ENCODE measurements at regions of chr1 and their contacts with region 1.

Region 1: DNA sequence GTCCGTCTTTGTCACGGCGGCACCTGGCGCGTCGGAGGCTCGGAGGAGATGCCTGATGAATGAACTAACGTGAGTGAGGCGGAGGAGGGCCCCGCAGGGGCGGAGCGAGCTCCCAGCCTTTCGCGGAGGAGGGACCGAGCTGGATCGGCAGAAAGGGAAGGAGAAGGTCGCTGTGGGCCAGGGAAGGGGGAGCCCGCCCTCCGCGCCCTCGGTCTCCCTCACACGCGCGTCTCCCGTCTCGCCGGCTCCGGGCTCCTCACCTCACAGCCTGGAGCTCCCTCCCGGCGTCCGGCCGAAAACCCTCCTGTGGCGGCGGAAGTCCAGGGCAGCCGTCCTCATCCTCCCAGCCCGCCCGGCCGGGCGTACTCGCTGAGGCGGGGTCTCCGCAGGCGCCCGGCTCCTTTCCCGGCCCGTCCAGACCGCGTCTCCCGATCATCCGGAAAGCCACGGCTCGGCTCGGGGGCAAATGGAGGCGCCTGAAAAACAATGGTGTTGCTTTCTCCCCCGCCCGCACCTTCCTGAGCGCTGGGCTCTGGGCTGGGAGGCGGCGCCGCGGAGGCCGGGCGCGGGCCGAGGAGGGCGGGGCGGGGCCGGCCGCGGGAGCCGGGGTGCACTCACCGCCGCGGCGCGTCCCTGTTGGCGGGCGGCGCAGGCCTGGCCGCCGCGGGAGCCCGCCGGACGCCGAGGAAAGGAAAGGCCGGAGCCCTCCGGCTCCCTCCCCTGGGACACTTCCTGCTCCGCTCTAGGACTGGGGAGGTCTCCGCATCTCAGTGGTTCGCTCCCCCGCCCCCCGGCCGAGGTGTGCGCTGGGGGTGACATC is at the start of gene ZNF496:
- DNase-seq: peak; percentile 98
- ATAC-seq: peak; percentile 75
- H3K4me3 ChIP-seq: peak within 1 kb of the TSS; percentile 88
- H3K27ac ChIP-seq: peak within 1 kb of the TSS; percentile 51
- H3K4me1 ChIP-seq: peaks cover 46% of the 10 kb centered on the region
- H3K27me3 ChIP-seq: no peaks in the 10 kb centered on the region
- CTCF ChIP-seq: no peak
- total RNA-seq, gene ZNF496: 79.4 and 103 TPM in 2 replicates

Region 2: DNA sequence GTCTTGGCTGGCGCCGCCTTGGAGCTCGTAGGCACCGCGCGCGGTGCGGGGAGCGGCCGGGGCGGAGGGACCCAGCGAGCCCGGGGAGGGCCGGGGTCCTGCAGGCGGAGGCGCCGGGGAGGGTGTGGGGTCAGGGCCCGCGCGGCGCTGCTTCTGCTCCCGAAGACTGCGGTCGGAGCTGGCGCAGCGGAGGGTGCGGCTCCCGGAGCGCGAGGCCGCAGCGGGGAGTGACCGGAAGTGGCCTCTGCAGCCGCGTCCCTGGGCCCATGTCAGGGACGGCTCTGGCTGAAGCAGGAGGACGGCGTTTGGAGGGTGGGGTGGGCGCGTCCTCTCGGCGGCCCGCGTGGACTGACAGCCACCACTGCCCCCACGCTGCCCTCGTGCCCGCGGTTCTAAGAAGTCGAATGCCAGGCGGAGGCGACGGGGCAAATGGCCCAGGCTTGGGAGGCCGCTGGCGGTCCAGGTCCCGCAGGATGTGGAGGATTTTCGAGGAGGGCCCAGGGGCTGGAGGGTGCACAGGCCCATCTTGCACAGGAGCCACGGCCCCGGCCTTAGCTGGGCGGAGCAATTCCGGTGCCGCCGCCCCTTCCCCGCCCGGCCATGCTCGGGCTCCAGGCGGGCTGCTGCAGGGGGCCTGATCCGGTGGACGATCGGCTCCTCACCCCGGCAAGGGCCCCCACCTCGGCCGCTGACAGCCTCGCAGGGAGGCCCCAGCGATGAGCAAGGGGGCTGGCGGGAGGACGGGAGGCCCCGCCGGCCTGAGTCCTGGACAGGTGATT is 219.5 kb before region 1 on chr1:
- CTCF ChIA-PET with region 1: no interaction called
- POLR2A ChIA-PET with region 1: no interaction called
- intact Hi-C with region 1: loop called (anchors 5 kb)
- DNase-seq: peak; percentile 48
- ATAC-seq: peak; percentile 74
- H3K4me3 ChIP-seq: peak overlapping the region; percentile 83
- H3K27ac ChIP-seq: no peak overlapping the region
- H3K4me1 ChIP-seq: peaks cover 18% of the 10 kb centered on the region
- H3K27me3 ChIP-seq: no peaks in the 10 kb centered on the region
- CTCF ChIP-seq: no peak

Region 3: DNA sequence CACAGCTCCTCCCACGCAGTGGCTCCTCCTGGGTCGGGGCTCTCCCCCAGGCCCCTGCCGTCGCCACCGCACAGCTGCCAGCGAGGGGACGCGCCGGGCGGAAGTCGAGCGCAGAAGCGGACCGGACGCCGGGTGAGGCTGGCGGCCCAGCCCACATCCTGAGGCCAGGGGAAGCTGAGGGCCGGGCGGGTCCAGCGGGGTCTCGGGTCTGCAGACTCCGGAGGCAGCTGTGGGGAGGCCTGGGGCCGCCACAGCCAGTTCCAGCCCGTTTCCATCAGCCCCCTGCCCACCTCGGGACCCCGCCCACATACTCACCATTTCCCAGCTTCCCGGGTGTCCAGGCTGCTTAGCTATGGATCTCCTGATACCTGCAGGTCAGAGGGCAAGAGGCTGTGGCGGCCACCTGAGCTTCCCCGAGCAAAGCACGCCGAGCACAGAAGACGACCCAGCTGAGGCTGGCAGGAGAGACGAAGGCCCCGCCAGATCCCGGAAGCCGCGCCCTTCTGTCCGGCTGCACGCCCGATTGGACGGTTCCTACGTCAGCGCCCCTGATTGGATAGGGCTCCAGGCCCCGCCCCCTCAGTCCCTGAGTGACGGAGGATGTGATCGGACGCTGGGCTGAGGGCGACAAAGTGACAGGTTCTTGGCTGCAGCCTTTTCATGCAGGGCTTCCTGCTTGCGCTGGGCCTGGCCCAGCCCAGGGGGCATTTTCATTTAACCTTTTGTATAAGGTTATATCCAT is 120.8 kb before region 1 on chr1:
- CTCF ChIA-PET with region 1: no interaction called
- POLR2A ChIA-PET with region 1: no interaction called
- intact Hi-C with region 1: loop called (anchors 1 kb)
- DNase-seq: peak; percentile 100
- ATAC-seq: peak; percentile 98
- H3K4me3 ChIP-seq: peak overlapping the region; percentile 79
- H3K27ac ChIP-seq: peak overlapping the region; percentile 40
- H3K4me1 ChIP-seq: peaks cover 19% of the 10 kb centered on the region
- H3K27me3 ChIP-seq: no peaks in the 10 kb centered on the region
- CTCF ChIP-seq: no peak